ENCODE measurements at regions of chr5 and their contacts with region 1.

Region 1: GRCh38 chr5:157743163-157744050 is at the start of gene LSM11:
- DNase-seq: peak; percentile 51 to 94
- H3K4me3 ChIP-seq: peak within 1 kb of the TSS; percentile 97 to 98
- H3K27ac ChIP-seq: peak within 1 kb of the TSS in 1 of 2 donors; percentile 14
- H3K4me1 ChIP-seq: peaks cover 2 to 5% of the 10 kb centered on the region in 2 donors
- H3K27me3 ChIP-seq: no peaks in the 10 kb centered on the region
- CTCF ChIP-seq: peak; percentile 97 to 100 (median 99)
- total RNA-seq, gene LSM11: 1.3 TPM

Region 2: GRCh38 chr5:157142317-157143126 is 600.9 kb before region 1 on chr5 and contains the start of gene MED7:
- intact Hi-C with region 1: loop called (anchors 5 kb)
- DNase-seq: peak; percentile 88 to 98
- H3K4me3 ChIP-seq: peak within 1 kb of the TSS; percentile 74 to 77
- H3K27ac ChIP-seq: peak within 1 kb of the TSS; percentile 89 to 90
- H3K4me1 ChIP-seq: peaks cover 5 to 9% of the 10 kb centered on the region in 2 donors
- H3K27me3 ChIP-seq: no peaks in the 10 kb centered on the region
- CTCF ChIP-seq: no peak
- total RNA-seq, gene MED7: 2.3 TPM

Region 3: GRCh38 chr5:157328277-157328912 is 415.0 kb before region 1 on chr5:
- intact Hi-C with region 1: loop called (anchors 5 kb)
- DNase-seq: peak in 1 of 2 donors; percentile 70
- H3K4me3 ChIP-seq: peak overlapping the region; percentile 2 to 37
- H3K27ac ChIP-seq: no peak overlapping the region
- H3K4me1 ChIP-seq: no peaks in the 10 kb centered on the region
- H3K27me3 ChIP-seq: no peaks in the 10 kb centered on the region
- CTCF ChIP-seq: peak; percentile 79 to 91 (median 83)

Region 4: DNA sequence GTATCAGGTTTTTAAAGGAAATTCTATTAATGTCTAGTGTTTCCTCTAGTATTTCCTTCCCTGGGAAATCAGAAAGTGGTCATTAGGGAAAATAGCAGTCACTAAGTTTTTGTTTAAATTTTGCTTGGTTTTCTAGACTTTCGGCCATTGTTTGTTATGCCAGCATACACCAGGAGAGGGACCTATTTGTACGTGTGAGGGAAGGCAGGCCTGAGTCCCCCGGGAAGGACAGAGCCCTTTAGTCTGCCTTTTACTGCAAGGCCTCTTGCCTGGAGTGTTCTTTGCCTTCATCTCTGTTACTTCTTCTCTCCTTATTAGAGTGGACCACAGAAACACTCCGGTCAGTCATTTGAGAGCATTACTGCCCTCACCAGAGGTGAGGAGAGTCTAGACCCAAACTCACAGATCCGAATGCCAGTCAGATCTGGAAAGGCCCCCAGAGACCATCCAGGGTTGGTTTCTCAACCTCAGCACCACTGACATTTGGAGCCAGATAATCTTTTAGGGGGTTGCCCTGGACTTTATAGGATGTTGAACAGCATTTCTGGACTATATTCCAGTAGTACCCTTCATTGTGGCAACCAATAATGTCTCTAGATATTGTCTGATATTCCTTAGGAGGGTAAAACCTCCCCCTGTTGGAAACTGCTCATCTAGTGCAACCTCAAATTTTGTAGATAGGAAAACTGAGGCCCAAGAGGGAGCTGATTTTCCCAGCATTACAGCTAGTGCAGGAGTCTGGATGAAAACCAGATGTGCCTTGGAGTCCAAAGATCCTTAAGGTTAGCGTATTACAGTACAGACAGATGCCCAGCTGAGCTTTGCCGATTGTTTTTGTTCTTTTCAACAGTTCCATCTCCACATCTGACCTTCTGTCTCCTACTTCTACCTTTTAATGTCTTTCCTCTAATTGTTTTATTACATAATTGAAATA is 376.4 kb before region 1 on chr5:
- intact Hi-C with region 1: loop called (anchors 5 kb)
- DNase-seq: peak in 1 of 2 donors; percentile 72
- H3K4me3 ChIP-seq: no peak overlapping the region
- H3K27ac ChIP-seq: peak overlapping the region; percentile 28 to 54
- H3K4me1 ChIP-seq: peaks cover 0 to 3% of the 10 kb centered on the region in 2 donors
- H3K27me3 ChIP-seq: no peaks in the 10 kb centered on the region
- CTCF ChIP-seq: peak; percentile 53 to 78 (median 68)

Region 5: GRCh38 chr5:157575381-157576020 is 167.9 kb before region 1 on chr5 and contains the start of gene ADAM19:
- intact Hi-C with region 1: no loop called
- DNase-seq: peak in 1 of 2 donors; percentile 79
- H3K4me3 ChIP-seq: peak within 1 kb of the TSS; percentile 72 to 86
- H3K27ac ChIP-seq: peak within 1 kb of the TSS; percentile 71 to 82
- H3K4me1 ChIP-seq: peaks cover 10 to 22% of the 10 kb centered on the region in 2 donors
- H3K27me3 ChIP-seq: no peaks in the 10 kb centered on the region
- CTCF ChIP-seq: peak in 1 of 3 experiments; percentile 12
- total RNA-seq, gene ADAM19: 11.7 TPM

Region 6: DNA sequence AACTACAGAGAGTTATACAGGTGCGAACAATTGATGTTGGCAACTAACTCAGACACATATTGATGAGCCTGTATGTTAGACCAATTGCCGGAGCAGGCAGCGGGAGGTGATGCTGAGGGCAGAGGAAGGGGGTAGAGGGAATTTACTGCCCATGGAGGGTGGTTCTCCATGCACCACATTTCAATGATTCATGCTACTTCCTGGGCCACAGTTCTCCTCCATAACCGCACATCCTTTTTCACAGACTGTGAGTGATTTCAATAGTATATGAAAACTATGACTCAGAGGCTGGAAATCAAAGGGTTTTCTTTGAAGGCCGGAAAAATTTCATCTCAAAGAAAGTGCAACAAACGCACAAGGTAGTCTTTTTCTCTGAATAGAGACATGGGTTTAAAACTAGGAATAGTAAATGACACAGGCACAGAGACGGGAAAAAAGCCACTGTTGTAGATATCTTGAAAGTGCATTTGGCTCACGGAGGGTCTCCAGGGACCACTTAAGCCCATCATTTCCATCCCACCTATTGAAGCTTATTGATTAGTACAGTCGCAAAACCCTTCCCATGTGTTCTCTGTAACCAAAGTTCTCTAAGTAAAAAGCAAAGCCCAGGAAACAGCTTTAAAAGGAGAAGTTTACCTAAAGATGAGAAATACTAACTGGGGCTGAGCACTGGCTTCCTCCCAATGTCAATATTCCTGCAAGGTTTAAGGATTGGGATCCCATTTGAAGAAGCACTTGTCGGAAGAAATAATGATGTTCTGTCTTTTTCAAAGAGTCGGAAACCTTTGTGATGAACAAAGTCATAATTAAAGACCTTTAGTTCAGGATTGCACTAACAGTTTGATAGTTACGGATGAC is 139.8 kb before region 1 on chr5:
- intact Hi-C with region 1: no loop called
- DNase-seq: no peak
- H3K4me3 ChIP-seq: no peak overlapping the region
- H3K27ac ChIP-seq: no peak overlapping the region
- H3K4me1 ChIP-seq: no peaks in the 10 kb centered on the region
- H3K27me3 ChIP-seq: no peaks in the 10 kb centered on the region
- CTCF ChIP-seq: no peak

Region 7: DNA sequence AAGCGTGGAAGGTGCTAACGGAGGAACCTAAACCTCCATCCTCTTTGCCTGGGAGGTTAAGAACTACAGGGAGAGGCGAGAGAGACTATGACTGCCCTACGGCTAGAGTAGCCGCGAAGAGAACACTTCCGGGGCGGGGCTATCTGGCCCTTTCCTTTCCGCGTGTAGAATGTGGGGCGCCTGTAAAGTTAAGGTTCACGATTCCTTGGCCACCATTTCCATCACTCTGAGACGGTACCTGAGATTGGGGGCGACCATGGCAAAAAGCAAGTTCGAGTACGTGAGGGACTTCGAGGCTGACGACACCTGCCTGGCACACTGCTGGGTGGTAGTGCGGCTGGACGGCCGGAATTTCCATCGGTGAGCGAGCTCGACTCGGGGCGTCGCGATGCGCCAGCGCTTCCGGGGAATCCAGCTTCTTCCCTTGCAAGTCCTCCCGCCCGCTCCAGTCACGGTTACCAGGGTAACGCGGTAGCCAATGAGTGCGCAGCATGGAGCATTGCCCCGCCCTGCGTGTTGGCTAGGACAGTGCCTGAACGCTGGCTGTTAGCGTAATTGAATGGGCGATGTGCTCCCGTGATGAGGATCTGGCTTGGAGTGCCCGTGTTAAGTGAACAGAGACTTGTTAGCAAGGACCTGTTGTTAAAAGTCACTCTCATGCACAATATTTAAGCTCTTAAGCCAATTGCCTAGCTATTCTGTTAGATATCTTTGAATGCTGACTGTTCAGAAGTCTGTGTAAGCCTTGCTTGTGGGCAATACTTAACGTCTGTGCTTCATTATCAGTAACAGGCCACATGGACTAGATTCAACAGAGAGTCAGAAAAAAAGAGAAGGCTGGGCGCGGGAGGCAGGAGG is 11.9 kb before region 1 on chr5 and contains the start of gene THG1L:
- intact Hi-C with region 1: loop called (anchors 1 kb)
- DNase-seq: peak; percentile 96 to 99
- H3K4me3 ChIP-seq: peak within 1 kb of the TSS; percentile 59 to 76
- H3K27ac ChIP-seq: peak within 1 kb of the TSS; percentile 87
- H3K4me1 ChIP-seq: no peaks in the 10 kb centered on the region
- H3K27me3 ChIP-seq: no peaks in the 10 kb centered on the region
- CTCF ChIP-seq: no peak
- total RNA-seq, gene THG1L: 0.32 TPM

Measured in ascending aorta (tissue), 2 donors.